ENCODE measurements at regions of chr5 and their contacts with region 1.

Region 1: GRCh38 chr5:99116526-99116925 is 187.7 kb upstream of the CHD1 start:
- DNase-seq: no peak
- H3K4me3 ChIP-seq: no peak overlapping the region
- H3K27ac ChIP-seq: no peak overlapping the region
- H3K27me3 ChIP-seq: no peaks in the 10 kb centered on the region
- CTCF ChIP-seq: no peak

Region 2: GRCh38 chr5:99104538-99105132 is 11.9 kb before region 1 on chr5:
- CTCF ChIA-PET with region 1: interaction called, 21 read pairs
- POLR2A ChIA-PET with region 1: no interaction called
- DNase-seq: peak; percentile 2
- H3K4me3 ChIP-seq: no peak overlapping the region
- H3K27ac ChIP-seq: no peak overlapping the region
- H3K27me3 ChIP-seq: no peaks in the 10 kb centered on the region
- CTCF ChIP-seq: peak; percentile 60